CD4-positive, alpha-beta T cell (primary cell): ENCODE measurements at regions of chr20 and their contacts with region 1.

Region 1: DNA sequence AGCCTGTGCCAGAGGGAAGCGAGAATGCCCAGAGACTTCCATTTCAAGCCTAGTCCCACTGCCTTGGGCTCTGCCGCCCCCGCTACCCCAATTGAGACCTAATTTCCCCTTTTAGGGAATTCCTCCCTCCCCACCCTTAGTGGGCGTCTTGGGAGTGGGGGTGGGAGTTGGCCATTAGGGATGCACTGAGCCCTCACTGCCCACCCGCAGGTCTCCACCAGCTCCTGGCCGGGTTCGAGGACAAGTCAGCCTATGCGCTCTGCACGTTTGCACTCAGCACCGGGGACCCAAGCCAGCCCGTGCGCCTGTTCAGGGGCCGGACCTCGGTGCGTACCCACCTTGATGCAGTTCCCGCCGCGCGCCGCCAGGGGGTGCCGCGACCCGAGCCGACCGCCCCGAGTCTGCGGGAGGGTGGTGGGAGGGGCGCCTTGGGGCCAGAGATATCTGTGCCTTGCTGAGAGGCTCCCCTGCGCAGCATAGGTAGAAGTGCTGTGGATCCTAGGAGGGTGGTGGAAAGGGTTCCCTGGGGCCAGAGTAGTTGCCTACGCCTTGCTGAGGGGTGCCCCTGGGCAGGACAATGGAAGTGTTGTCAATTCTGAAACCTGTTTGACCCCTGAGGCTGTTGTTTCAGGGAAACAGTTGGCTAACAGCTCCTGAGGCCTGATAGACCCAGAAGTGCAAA is 9.2 kb downstream of the ITPA start:
- DNase-seq: peak; percentile 46 to 84 (median 72)
- ATAC-seq: peak; percentile 69
- H3K4me3 ChIP-seq: no peak overlapping the region
- H3K4me3 Mint-ChIP-seq: no peak overlapping the region
- H3K27ac ChIP-seq: no peak overlapping the region
- H3K27ac Mint-ChIP-seq: no peak overlapping the region
- H3K4me1 ChIP-seq: peaks cover 20% of the 10 kb centered on the region
- H3K4me1 Mint-ChIP-seq: peaks cover 11% of the 10 kb centered on the region
- H3K27me3 ChIP-seq: no peaks in the 10 kb centered on the region
- H3K27me3 Mint-ChIP-seq: no peaks in the 10 kb centered on the region
- CTCF ChIP-seq: peak; percentile 97

Region 2: GRCh38 chr20:3045816-3046676 is 172.4 kb before region 1 on chr20 and contains the start of gene MRPS26:
- CTCF ChIA-PET with region 1: no interaction called
- POLR2A ChIA-PET with region 1: interaction called, 5 read pairs
- intact Hi-C with region 1: loop called (anchors 5 to 10 kb)
- DNase-seq: peak; percentile 57 to 87 (median 76)
- ATAC-seq: peak; percentile 86
- H3K4me3 ChIP-seq: peak within 1 kb of the TSS; percentile 76
- H3K4me3 Mint-ChIP-seq: peak within 1 kb of the TSS; percentile 95
- H3K27ac ChIP-seq: peak within 1 kb of the TSS; percentile 48 to 49
- H3K27ac Mint-ChIP-seq: peak within 1 kb of the TSS; percentile 83
- H3K4me1 ChIP-seq: peaks cover 27% of the 10 kb centered on the region
- H3K4me1 Mint-ChIP-seq: peaks cover 21% of the 10 kb centered on the region
- H3K27me3 ChIP-seq: no peaks in the 10 kb centered on the region
- H3K27me3 Mint-ChIP-seq: no peaks in the 10 kb centered on the region
- CTCF ChIP-seq: no peak
- total RNA-seq, gene MRPS26: 19.3 to 22.7 TPM

Region 3: DNA sequence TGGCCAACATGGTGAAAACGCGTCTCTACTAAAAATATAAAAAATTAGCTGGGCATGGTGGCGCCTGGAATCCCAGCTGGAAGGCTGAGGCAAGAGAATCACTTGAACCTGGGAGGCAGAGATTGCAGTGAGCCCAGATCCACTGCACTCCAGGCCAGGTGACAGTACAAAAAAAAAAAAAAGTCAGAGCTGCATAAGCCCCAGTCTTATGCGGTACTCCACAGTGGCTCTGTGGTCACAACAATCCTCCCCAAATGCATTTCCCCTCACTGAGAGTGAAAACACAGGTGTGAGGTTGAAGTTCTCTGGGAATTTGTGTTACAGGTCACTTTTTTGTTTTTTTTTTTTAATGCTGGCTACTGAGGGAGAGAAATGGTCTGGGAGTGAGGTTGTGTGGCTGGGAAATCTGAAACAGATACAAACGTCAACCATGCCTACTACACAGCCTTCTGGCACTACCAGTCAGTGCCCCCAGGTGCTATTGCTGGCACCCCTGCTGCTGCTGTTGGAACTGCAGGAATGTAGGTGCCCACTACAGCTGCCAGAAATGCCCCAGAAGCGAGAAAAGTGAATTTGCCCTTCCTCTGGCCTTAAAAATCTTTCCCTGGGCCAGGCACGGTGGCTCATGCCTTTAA is 166.9 kb before region 1 on chr20:
- CTCF ChIA-PET with region 1: interaction called, 4 read pairs
- POLR2A ChIA-PET with region 1: no interaction called
- intact Hi-C with region 1: loop called (anchors 5 to 10 kb)
- DNase-seq: no peak
- ATAC-seq: peak; percentile 47
- H3K4me3 ChIP-seq: no peak overlapping the region
- H3K4me3 Mint-ChIP-seq: no peak overlapping the region
- H3K27ac ChIP-seq: no peak overlapping the region
- H3K27ac Mint-ChIP-seq: no peak overlapping the region
- H3K4me1 ChIP-seq: peaks cover 18% of the 10 kb centered on the region
- H3K4me1 Mint-ChIP-seq: peaks cover 18% of the 10 kb centered on the region
- H3K27me3 ChIP-seq: no peaks in the 10 kb centered on the region
- H3K27me3 Mint-ChIP-seq: no peaks in the 10 kb centered on the region
- CTCF ChIP-seq: no peak

Region 4: GRCh38 chr20:3239026-3239866 is 20.8 kb after region 1 on chr20 and contains the start of gene SLC4A11:
- CTCF ChIA-PET with region 1: no interaction called
- POLR2A ChIA-PET with region 1: interaction called, 13 read pairs
- intact Hi-C with region 1: no loop called
- DNase-seq: peak in 9 of 14 experiments; percentile 10 to 55 (median 41)
- ATAC-seq: peak; percentile 61
- H3K4me3 ChIP-seq: peak within 1 kb of the TSS; percentile 64
- H3K4me3 Mint-ChIP-seq: peak within 1 kb of the TSS; percentile 93
- H3K27ac ChIP-seq: no peak within 1 kb of the TSS
- H3K27ac Mint-ChIP-seq: no peak within 1 kb of the TSS
- H3K4me1 ChIP-seq: peaks cover 24% of the 10 kb centered on the region
- H3K4me1 Mint-ChIP-seq: peaks cover 6% of the 10 kb centered on the region
- H3K27me3 ChIP-seq: peaks cover 51 to 53% of the 10 kb centered on the region in 2 experiments
- H3K27me3 Mint-ChIP-seq: peaks cover 70% of the 10 kb centered on the region
- CTCF ChIP-seq: no peak
- total RNA-seq, gene SLC4A11: 0.08 to 0.60 TPM

Region 5: GRCh38 chr20:3312940-3313682 is 94.7 kb after region 1 on chr20:
- CTCF ChIA-PET with region 1: interaction called, 4 read pairs
- POLR2A ChIA-PET with region 1: interaction called, 6 read pairs
- intact Hi-C with region 1: loop called (anchors 1 kb)
- DNase-seq: no peak
- ATAC-seq: no peak
- H3K4me3 ChIP-seq: no peak overlapping the region
- H3K4me3 Mint-ChIP-seq: no peak overlapping the region
- H3K27ac ChIP-seq: no peak overlapping the region
- H3K27ac Mint-ChIP-seq: no peak overlapping the region
- H3K4me1 ChIP-seq: no peaks in the 10 kb centered on the region
- H3K4me1 Mint-ChIP-seq: no peaks in the 10 kb centered on the region
- H3K27me3 ChIP-seq: no peaks in the 10 kb centered on the region
- H3K27me3 Mint-ChIP-seq: no peaks in the 10 kb centered on the region
- CTCF ChIP-seq: no peak

Region 6: GRCh38 chr20:4195499-4195898 is 977.1 kb after region 1 on chr20:
- CTCF ChIA-PET with region 1: no interaction called
- POLR2A ChIA-PET with region 1: no interaction called
- intact Hi-C with region 1: no loop called
- DNase-seq: no peak
- ATAC-seq: no peak
- H3K4me3 ChIP-seq: no peak overlapping the region
- H3K4me3 Mint-ChIP-seq: no peak overlapping the region
- H3K27ac ChIP-seq: no peak overlapping the region
- H3K27ac Mint-ChIP-seq: no peak overlapping the region
- H3K4me1 ChIP-seq: no peaks in the 10 kb centered on the region
- H3K4me1 Mint-ChIP-seq: no peaks in the 10 kb centered on the region
- H3K27me3 ChIP-seq: peaks cover 2 to 3% of the 10 kb centered on the region in 2 experiments
- H3K27me3 Mint-ChIP-seq: peaks cover 18% of the 10 kb centered on the region
- CTCF ChIP-seq: no peak